AG04449 (cell line): ENCODE measurements at regions of chrX and their contacts with region 1.

Region 1: GRCh38 chrX:134396174-134396573 is 63.8 kb upstream of the HPRT1 start:
- DNase-seq: no peak
- H3K4me3 ChIP-seq: no peak overlapping the region
- CTCF ChIP-seq: peak; percentile 39

Region 2: DNA sequence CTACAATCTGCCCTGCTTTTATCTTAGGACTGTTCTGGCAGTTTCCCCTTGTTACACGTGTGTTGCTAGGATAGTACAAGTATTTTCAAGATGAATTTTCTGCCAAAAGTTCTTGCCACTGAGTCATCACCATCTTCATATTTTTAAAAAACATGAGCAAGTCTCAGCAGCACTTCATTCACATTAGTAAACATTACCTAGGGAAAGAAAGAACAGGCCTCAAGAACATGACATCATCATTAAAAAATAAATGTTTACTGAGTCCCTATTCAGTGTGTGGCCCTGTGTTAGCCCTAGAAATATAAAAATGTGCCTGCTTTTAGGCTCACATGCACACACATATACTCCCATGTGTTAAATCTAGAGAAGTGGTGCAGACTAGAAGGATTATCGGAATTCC is 392.1 kb before region 1 on chrX:
- CTCF ChIA-PET with region 1: no interaction called
- POLR2A ChIA-PET with region 1: no interaction called
- DNase-seq: no peak
- H3K4me3 ChIP-seq: no peak overlapping the region
- CTCF ChIP-seq: no peak

Region 3: DNA sequence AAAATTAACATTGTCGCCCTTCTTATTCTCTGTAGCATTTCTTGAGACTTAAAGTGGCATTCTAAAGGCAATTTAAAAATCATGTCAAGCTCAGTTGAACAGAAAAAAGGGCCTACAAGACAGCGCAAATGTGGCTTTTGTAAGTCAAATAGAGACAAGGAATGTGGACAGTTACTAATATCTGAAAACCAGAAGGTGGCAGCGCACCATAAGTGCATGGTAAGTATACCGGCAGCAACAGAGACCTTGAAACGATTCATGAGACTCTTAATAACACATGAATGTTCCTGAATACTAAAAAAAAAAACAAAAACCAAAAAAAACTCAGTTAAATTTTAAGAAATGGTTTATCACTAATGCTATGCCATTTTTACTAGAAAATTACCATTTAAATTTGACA is 18.6 kb before region 1 on chrX:
- CTCF ChIA-PET with region 1: interaction called, 14 read pairs
- POLR2A ChIA-PET with region 1: no interaction called
- DNase-seq: peak; percentile 5
- H3K4me3 ChIP-seq: no peak overlapping the region
- CTCF ChIP-seq: peak; percentile 27

Region 4: GRCh38 chrX:134382816-134383215 is 13.4 kb before region 1 on chrX:
- CTCF ChIA-PET with region 1: interaction called, 14 read pairs
- POLR2A ChIA-PET with region 1: no interaction called
- DNase-seq: no peak
- H3K4me3 ChIP-seq: no peak overlapping the region
- CTCF ChIP-seq: no peak

Region 5: GRCh38 chrX:134406356-134407064 is 10.3 kb after region 1 on chrX:
- CTCF ChIA-PET with region 1: interaction called, 20 read pairs
- POLR2A ChIA-PET with region 1: no interaction called
- DNase-seq: no peak
- H3K4me3 ChIP-seq: no peak overlapping the region
- CTCF ChIP-seq: no peak